ENCODE measurements at regions of chr11 and their contacts with region 1.

Region 1: DNA sequence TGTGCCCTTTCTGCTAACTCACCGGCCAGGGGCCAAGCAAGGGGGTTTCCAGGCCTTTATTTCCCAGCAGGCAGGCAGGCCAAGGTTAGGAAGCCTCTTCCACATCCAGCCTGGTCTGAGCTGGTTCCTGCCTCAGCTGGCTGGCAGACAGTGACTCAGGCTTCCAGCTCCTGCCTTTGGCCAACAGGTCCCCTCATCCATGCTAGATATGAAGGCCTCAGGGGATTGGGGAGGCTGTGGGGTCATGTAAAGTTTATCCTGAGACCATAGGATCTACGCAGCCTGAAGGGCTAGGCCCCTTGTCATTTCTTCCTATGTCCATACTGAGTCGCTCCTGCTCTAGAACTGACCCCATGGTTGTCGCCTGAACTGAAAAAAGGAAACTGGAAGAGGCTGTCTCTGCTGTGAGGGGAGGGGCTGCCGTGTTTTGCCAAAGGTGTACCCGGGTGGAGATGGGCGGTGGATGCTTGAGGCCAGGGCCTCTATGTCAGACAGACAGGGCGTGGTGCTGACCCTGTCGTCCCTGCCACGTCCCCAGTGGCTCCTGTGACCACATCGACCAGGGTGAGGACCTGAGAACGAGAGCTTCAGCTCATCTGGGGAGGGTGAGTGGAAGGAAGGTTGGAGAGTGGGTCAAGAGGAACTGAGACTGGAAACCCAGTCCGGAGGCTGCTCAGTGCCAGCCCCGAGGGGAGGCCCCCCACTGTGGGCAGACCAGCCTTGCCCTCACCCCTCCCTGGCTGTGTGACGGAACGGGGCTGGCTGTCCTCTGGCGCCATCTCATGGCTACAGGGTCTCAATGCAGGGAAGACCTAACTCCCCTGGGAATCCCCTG is 17.0 kb downstream of the P2RY6 start:
- DNase-seq: peak; percentile 85
- ATAC-seq: peak; percentile 85
- H3K4me3 Mint-ChIP-seq: no peak overlapping the region
- H3K27ac Mint-ChIP-seq: no peak overlapping the region
- H3K4me1 Mint-ChIP-seq: peaks cover 9% of the 10 kb centered on the region
- H3K27me3 Mint-ChIP-seq: peaks cover 9% of the 10 kb centered on the region
- CTCF ChIP-seq: peak; percentile 81

Region 2: DNA sequence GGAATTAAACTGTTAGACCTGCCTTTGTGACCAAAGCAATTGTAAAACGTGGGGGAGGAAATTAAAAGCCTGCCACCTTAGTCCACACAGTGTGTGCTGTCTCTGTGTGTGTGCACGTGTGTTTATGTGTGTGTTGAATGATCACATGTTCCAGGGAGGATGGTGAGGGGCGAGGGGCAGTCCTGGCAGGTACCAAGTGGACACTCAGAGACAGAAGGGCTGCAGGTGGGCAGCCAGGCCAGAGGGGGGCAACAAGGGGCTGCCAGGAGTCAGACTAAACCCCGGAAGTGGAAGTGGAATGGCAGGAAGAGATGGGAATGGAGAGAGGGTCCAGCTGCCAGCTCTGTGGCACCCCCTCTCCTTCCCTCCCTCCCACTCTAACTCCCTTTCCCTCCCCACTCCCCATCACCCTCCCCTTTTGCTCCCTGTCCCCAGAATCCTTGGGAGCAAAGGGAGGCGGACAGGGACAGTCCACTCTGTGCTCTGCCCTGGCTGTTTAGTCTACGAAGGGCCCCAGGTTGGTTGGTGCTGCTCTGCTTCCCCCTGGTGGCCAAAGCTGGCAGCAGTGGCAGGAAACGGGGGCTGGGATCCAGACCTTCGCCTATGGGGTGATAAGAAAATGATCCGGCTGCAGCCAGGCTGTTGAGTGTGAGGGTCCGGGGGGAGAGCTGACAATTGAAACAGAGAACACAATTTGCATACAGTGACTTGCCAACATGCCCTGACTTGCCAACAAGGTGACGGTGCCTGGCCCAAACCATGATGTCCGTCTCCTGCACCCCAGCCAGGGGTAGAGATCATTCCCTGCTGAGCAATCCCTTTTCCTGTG is 46.6 kb before region 1 on chr11:
- CTCF ChIA-PET with region 1: interaction called, 49 read pairs
- POLR2A ChIA-PET with region 1: interaction called, 3 read pairs
- DNase-seq: peak; percentile 87
- ATAC-seq: peak; percentile 91
- H3K4me3 Mint-ChIP-seq: peak overlapping the region; percentile 51
- H3K27ac Mint-ChIP-seq: no peak overlapping the region; the same call in 1 of the 2 replicates
- H3K4me1 Mint-ChIP-seq: peaks cover 36% of the 10 kb centered on the region
- H3K27me3 Mint-ChIP-seq: no peaks in the 10 kb centered on the region; the same call in 1 of the 2 replicates
- CTCF ChIP-seq: peak; percentile 67

Region 3: GRCh38 chr11:73257342-73258103 is 31.6 kb before region 1 on chr11:
- CTCF ChIA-PET with region 1: interaction called, 16 read pairs
- POLR2A ChIA-PET with region 1: no interaction called
- DNase-seq: no peak
- ATAC-seq: peak; percentile 48; the same call in 1 of the 2 replicates
- H3K4me3 Mint-ChIP-seq: no peak overlapping the region
- H3K27ac Mint-ChIP-seq: no peak overlapping the region
- H3K4me1 Mint-ChIP-seq: peaks cover 6% of the 10 kb centered on the region; the same call in 1 of the 2 replicates
- H3K27me3 Mint-ChIP-seq: peaks cover 3% of the 10 kb centered on the region
- CTCF ChIP-seq: no peak

Region 4: DNA sequence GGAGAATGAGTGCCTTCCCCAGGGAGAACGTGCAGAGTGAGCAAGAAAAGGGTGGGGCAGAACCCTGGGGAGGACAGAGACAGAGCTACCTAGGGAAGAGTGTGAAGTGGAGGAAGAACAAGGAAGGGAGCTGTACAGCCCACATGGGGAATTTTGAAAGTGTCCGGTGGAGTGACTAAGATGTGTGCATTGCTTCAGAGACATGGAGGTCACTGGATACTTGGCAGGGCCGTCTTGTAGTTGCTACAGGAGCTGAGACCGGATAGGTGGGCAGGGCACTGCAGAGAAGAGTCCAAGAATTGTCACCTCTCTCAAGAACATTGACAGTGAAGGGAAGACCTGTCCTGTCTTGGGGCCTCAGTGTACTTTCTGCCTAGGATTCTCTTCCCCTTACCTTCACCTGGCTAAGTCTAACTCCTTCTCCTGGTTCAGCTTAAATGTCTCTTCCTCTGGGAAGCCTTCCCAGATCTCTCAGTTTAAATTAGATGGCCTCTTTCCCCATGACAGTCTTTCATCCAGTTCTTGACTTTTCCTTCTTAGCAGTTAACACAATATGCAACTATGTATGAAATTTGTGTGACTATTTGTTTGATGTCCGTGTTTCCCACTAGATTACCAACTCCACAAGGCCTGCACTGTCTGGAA is 26.1 kb before region 1 on chr11:
- CTCF ChIA-PET with region 1: interaction called, 36 read pairs
- POLR2A ChIA-PET with region 1: no interaction called
- DNase-seq: no peak
- ATAC-seq: no peak
- H3K4me3 Mint-ChIP-seq: no peak overlapping the region
- H3K27ac Mint-ChIP-seq: no peak overlapping the region
- H3K4me1 Mint-ChIP-seq: peaks cover 4% of the 10 kb centered on the region
- H3K27me3 Mint-ChIP-seq: peaks cover 40% of the 10 kb centered on the region
- CTCF ChIP-seq: no peak

Region 5: DNA sequence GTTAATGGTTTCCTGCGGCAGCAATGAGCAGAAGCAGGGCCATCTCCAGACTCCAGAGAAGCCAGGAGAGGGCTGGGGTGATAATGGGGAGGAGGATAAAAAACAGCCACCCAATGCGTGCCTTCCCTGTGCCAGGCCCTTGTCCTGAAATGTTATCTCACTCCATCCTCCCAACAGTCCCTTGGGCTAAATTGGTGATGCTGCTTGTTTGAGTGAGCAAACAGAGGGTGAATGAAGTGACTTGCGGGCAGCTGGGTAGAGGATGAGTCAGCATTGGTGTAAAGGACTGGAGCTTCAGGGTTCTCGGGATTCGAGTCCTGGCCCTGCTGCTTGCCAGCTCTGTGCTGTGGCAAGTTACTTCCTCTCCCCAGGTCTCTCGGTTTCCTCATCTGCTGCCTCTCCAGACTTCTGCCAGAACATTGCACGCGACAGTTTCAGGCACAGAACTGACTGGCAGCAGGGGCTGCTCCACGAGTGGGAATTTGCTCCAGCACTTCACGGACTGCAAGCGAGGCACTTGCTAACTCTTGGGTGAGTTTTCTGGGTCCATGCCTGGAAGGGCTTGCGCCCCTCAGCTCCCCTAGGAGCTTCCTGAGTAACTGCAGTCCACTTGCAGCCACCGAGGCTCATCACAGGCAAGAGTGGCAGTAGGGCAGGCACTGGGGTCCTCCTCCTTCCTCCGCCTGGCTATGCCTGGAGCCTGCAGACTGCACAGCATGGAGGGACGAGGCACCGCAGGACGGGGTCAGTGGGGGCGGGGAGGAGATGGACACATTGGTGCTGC is 17.0 kb before region 1 on chr11 and contains the start of gene P2RY6:
- CTCF ChIA-PET with region 1: interaction called, 36 read pairs
- POLR2A ChIA-PET with region 1: no interaction called
- DNase-seq: peak; percentile 13
- ATAC-seq: no peak; the same call in 1 of the 2 replicates
- H3K4me3 Mint-ChIP-seq: no peak within 1 kb of the TSS
- H3K27ac Mint-ChIP-seq: no peak within 1 kb of the TSS; the same call in 1 of the 2 replicates
- H3K4me1 Mint-ChIP-seq: peaks cover 34% of the 10 kb centered on the region
- H3K27me3 Mint-ChIP-seq: 0 out of 2 replicates have a peak, but pooled peaks cover under 1% of the 10 kb centered on the region
- CTCF ChIP-seq: no peak
- total RNA-seq, gene P2RY6: 0.11 to 0.16 TPM in 2 of 3 replicates, not detected in the other